Vagina (tissue), 2 donors: ENCODE measurements at regions of chr12 and their contacts with region 1.

Region 1: DNA sequence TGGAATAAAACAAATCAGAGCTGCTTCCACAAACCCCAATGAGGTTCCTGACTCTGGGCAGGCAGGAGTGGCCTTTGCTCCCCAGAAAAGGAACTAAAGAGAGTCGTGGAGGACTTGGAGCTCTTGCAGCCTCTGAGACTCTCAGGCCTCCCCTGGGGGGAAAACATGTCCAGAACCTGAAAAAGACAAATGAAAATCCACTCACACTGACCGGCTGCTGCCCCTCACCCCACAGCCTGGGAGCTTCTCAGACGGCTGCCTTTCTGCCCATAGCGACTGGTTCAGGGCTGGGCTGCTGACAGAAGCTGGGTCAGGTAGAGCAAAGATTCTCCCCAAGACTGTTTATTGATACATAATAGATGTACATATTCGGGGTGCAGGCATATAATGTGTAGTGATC is 356.0 kb downstream of the ADGRD1 start:
- DNase-seq: peak in 1 of 2 donors; percentile 81
- H3K4me3 ChIP-seq: no peak overlapping the region
- H3K27ac ChIP-seq: no peak overlapping the region
- H3K4me1 ChIP-seq: no peaks in the 10 kb centered on the region
- H3K27me3 ChIP-seq: no peaks in the 10 kb centered on the region
- CTCF ChIP-seq: no peak
- POLR2A ChIP-seq: no peak

Region 2: GRCh38 chr12:131250028-131250950 is 59.4 kb before region 1 on chr12:
- intact Hi-C with region 1: no loop called
- DNase-seq: no peak
- H3K4me3 ChIP-seq: no peak overlapping the region
- H3K27ac ChIP-seq: peak overlapping the region; percentile 53
- H3K4me1 ChIP-seq: peaks cover 12% of the 10 kb centered on the region
- H3K27me3 ChIP-seq: no peaks in the 10 kb centered on the region
- CTCF ChIP-seq: no peak
- POLR2A ChIP-seq: no peak

Region 3: DNA sequence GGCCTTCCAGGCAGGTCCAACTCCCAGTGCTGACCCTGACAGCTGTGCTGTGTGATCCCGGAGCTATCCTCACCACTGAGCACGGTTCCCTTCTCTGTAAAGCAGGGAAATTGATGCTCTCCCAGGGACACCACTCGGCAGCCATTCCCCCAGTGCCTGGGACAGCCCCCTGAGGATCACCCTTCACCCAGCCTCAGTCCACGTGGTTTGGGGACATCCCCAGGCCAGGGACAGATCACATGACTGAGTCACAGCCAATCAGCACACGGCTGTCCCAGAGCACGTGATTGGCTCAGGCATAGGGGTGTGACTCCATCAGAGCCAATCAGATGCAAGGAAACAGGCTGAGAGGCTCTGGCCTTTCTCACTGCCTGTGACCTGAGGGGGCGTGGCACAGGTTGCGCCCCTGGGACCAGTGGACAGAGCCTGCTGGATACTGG is 332.4 kb after region 1 on chr12:
- intact Hi-C with region 1: loop called (anchors 5 kb)
- DNase-seq: no peak
- H3K4me3 ChIP-seq: no peak overlapping the region
- H3K27ac ChIP-seq: no peak overlapping the region
- H3K4me1 ChIP-seq: no peaks in the 10 kb centered on the region
- H3K27me3 ChIP-seq: no peaks in the 10 kb centered on the region
- CTCF ChIP-seq: no peak
- POLR2A ChIP-seq: no peak